ENCODE measurements at regions of chr12 and their contacts with region 1.

Region 1: GRCh38 chr12:42144408-42145196 is at the start of gene GXYLT1:
- DNase-seq: peak; percentile 95
- H3K4me3 ChIP-seq: peak within 1 kb of the TSS; percentile 64 to 95 (median 74)
- H3K27ac ChIP-seq: peak within 1 kb of the TSS; percentile 89 to 97 (median 92)
- H3K4me1 ChIP-seq: peaks cover 0 to 27% (median 10%) of the 10 kb centered on the region in 4 donors
- H3K27me3 ChIP-seq: no peaks in the 10 kb centered on the region
- CTCF ChIP-seq: no peak
- EP300 ChIP-seq: no peak
- POLR2A ChIP-seq: peak; percentile 65
- total RNA-seq, gene GXYLT1: 3.6 to 17.5 (median 8.7) TPM

Region 2: GRCh38 chr12:42162193-42162592 is 17.6 kb after region 1 on chr12:
- in situ Hi-C with region 1: no loop called
- intact Hi-C with region 1: no loop called
- DNase-seq: no peak
- H3K4me3 ChIP-seq: no peak overlapping the region
- H3K27ac ChIP-seq: no peak overlapping the region
- H3K4me1 ChIP-seq: peaks cover 0 to 11% (median 2%) of the 10 kb centered on the region in 4 donors
- H3K27me3 ChIP-seq: no peaks in the 10 kb centered on the region
- CTCF ChIP-seq: no peak
- EP300 ChIP-seq: no peak
- POLR2A ChIP-seq: no peak

Region 3: GRCh38 chr12:42237052-42237852 is 92.7 kb after region 1 on chr12:
- in situ Hi-C with region 1: loop called in 2 of 4 experiments (anchors 10 to 25 kb)
- intact Hi-C with region 1: loop called (anchors 5 kb)
- DNase-seq: peak; percentile 82
- H3K4me3 ChIP-seq: peak overlapping the region; percentile 49 to 95 (median 74)
- H3K27ac ChIP-seq: peak overlapping the region; percentile 97 to 98 (median 98)
- H3K4me1 ChIP-seq: peaks cover 0 to 38% (median 23%) of the 10 kb centered on the region in 4 donors
- H3K27me3 ChIP-seq: no peaks in the 10 kb centered on the region
- CTCF ChIP-seq: peak; percentile 36 to 65 (median 49)
- EP300 ChIP-seq: no peak
- POLR2A ChIP-seq: peak; percentile 47

Region 4: DNA sequence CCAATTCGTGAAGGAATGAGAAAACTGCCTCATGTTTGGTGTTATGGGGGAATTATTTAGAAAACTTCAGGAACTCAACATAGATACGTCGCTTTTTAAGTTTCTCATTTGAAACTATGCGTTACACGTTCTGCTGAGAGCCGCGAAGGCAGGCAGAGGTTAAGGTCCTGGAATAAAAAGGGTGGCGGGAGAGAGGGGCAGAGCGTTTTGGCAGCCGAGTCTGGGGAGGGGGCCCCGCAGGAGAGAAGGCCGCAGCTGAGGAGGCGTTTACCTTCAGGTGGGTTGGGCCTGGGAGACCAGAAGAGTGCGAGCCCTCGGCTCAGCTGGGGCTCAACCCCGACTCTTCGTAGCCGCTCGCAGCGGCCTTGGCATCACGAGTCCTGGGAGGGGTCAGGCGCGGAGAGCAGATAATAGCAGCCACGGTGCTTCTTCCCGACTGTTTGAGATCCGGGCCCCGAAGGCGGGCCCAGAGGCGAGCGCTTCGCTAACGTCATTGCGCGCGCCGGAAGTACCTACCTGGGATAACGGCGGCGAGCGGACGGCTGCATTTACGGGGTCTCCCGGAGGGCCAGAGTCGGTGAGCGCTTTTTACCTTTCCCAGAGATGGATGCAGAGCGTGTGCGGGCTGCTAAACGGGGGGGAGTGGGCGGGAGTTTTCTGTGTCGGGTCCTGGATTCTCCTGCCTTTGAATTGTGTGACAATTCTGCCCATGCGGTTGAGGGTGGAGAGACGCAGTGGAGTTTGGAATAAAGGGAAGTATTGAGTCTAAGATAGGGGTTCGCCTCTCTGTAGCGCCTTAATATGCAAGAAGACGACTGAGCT is 181.3 kb after region 1 on chr12 and contains the starts of genes PPHLN1 and ZCRB1:
- in situ Hi-C with region 1: loop called (anchors 10 kb)
- intact Hi-C with region 1: no loop called
- DNase-seq: peak; percentile 87
- H3K4me3 ChIP-seq: peak within 1 kb of the TSS; percentile 66 to 82 (median 78)
- H3K27ac ChIP-seq: peak within 1 kb of the TSS; percentile 86 to 93 (median 86)
- H3K4me1 ChIP-seq: peaks cover 12 to 23% (median 21%) of the 10 kb centered on the region in 4 donors
- H3K27me3 ChIP-seq: no peaks in the 10 kb centered on the region
- CTCF ChIP-seq: peak in 1 of 5 experiments; percentile 30
- EP300 ChIP-seq: no peak
- POLR2A ChIP-seq: peak; percentile 78
- total RNA-seq, gene PPHLN1: 44.9 to 324 (median 59.6) TPM
- total RNA-seq, gene ZCRB1: 3.4 to 22.7 (median 15.2) TPM

Region 5: DNA sequence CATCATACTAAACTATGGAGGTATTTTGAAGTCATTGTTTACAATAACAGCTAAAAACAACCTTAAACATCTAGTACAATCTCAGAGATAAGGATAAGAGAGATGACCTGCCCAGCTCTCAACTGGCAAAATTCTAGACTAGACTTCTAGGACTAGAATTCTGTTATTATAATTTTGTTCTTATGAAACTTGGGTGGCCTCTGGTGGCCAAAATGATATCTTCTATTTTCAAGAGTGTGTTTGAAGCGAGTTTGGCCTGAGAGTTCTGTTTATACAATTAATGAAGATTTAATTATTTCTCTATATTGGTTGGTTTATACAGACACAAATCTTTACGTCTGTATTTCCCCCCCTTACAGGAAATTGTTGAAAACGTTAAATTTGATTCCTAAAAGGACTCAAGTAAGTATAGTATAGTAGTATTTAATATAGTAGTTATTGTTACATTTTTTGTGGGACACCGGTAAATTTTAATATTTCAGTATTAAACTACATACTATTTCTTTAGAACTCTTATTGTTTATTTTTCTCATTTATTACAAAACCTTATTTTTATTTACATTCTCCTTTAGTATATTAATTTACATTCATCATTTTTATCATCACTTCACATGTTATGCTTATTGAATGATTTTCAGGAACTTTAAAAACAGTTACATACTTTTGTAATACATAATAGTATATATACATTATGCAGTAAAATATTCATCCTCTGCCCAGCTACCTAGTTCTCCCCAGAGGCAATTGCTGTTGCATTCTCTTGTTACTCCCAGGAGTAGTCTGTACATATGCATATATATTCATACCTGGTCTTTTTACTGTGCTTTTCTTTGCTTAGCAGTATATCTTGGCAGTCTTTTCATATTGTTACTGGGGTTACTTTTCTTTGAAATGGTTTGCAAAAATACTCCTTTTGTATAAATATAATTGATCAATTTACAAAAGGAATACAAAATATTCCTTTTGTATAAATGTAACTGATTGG is 188.0 kb after region 1 on chr12:
- in situ Hi-C with region 1: loop called (anchors 10 kb)
- intact Hi-C with region 1: no loop called
- DNase-seq: no peak
- H3K4me3 ChIP-seq: no peak overlapping the region
- H3K27ac ChIP-seq: no peak overlapping the region
- H3K4me1 ChIP-seq: peaks cover 4 to 16% (median 6%) of the 10 kb centered on the region in 4 donors
- H3K27me3 ChIP-seq: no peaks in the 10 kb centered on the region
- CTCF ChIP-seq: peak; percentile 51 to 64 (median 60)
- EP300 ChIP-seq: no peak
- POLR2A ChIP-seq: no peak

Region 6: DNA sequence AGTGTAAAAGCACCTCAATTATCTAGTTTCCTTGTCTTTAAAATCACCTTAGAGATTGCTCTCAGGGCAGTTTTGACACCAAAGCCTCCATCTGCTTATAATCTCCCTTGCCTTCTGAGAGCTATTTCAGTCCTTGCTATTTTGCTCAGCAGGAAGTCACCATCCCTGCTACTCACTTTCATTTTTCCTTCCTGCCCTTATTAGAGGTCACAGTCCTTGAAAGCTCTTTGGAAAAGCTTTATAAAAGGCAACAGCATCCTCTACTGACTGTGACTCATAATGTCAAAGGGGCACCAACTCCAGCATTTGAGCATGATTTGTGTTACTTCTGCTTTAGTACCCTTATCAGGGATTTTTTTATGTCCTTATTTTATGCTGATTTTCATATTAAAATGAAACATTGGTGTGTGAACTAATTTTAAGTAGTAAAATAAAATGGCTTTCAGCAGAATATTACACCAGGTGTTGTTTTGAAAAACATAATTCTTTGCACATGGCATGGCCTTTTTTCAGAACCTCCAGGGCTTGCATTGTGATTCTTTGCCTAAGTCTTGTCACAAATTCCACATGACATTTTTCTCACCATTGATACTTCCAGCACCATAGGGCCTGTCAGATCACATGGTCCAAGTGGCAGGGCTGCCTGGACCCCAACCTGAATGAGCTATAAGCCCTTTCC is 1194.4 kb after region 1 on chr12:
- in situ Hi-C with region 1: loop called in 1 of 4 experiments (anchors 25 kb)
- intact Hi-C with region 1: no loop called
- DNase-seq: no peak
- H3K4me3 ChIP-seq: no peak overlapping the region
- H3K27ac ChIP-seq: no peak overlapping the region
- H3K4me1 ChIP-seq: peaks cover 0 to 6% (median 0%) of the 10 kb centered on the region in 4 donors
- H3K27me3 ChIP-seq: no peaks in the 10 kb centered on the region
- CTCF ChIP-seq: peak in 1 of 5 experiments; percentile 18
- EP300 ChIP-seq: no peak
- POLR2A ChIP-seq: no peak